ENCODE measurements at regions of chr17 and their contacts with region 1.

Region 1: DNA sequence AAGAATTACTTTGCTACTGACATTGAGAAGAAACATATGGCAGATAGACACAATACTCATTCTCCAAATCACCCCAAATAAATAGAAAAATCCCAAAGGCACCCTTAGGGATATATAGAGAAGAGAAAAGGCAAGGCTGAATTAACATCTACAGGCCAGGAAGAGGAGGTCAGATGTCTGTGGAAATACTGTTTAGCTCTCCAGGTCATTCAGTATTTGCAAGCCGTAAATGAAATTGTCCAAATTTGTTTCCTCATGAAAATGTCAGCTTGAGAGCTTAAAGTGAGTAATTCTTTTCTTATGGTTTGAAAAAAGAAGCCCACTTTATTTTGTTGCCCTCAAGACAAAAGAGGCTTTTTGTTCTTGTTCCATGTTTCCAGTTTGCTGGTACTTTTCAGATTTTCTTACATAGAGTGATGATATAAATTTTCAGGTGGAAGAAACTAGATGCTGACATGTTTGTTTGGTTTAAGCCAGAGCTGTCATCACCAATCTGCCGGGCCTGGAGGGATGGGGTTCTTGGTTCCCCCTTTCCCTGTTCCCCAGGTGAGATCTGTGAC is 189.0 kb downstream of the MAP2K4 start:
- DNase-seq: no peak
- ATAC-seq: no peak
- H3K4me3 ChIP-seq: no peak overlapping the region
- H3K27ac ChIP-seq: no peak overlapping the region
- H3K4me1 ChIP-seq: peaks cover 2% of the 10 kb centered on the region
- H3K27me3 ChIP-seq: no peaks in the 10 kb centered on the region

Region 2: GRCh38 chr17:12328204-12328603 is 118.5 kb after region 1 on chr17:
- intact Hi-C with region 1: no loop called
- DNase-seq: no peak
- ATAC-seq: no peak
- H3K4me3 ChIP-seq: no peak overlapping the region
- H3K27ac ChIP-seq: no peak overlapping the region
- H3K4me1 ChIP-seq: no peaks in the 10 kb centered on the region
- H3K27me3 ChIP-seq: no peaks in the 10 kb centered on the region

Region 3: GRCh38 chr17:13287226-13287625 is 1077.5 kb after region 1 on chr17:
- intact Hi-C with region 1: loop called in 1 of 4 experiments (anchors 5 kb)
- DNase-seq: no peak
- ATAC-seq: no peak
- H3K4me3 ChIP-seq: no peak overlapping the region
- H3K27ac ChIP-seq: no peak overlapping the region
- H3K4me1 ChIP-seq: no peaks in the 10 kb centered on the region
- H3K27me3 ChIP-seq: no peaks in the 10 kb centered on the region

Measured in right cardiac atrium (tissue), 5 donors.